ENCODE measurements at regions of chr7 and their contacts with region 1.

Region 1: DNA sequence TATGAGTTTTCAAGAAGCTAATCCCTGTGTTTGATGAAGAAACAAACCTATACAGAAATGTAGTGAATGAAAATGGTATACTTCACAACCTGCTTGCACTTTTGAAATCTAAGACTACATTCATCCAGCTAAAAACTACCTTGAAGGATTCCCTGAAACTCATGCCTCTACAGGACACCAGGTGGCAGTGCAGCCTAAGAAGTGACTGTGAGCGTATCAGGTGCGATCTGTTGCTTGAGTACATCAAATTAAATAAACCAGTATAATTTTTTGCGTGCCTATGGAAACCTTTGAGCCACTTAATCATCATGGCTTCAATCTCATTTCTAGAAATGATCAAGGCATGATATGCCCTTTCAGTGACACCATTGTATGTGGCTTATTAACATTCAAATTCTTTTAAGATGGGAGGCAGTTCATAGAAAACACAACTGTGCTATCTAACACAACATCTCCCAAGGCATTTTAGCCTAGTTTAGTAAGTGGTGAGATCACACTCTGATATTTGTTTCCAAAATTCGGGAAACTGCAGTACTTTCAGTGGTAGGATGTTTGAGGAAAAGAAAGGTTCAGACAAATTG is 57.4 kb downstream of the PPP1R17 start:
- DNase-seq: peak; percentile 73
- ATAC-seq: peak; percentile 91
- H3K4me3 ChIP-seq: no peak overlapping the region
- H3K27ac ChIP-seq: no peak overlapping the region
- H3K4me1 ChIP-seq: peaks cover 3% of the 10 kb centered on the region; the same call in 1 of the 2 replicates
- H3K27me3 ChIP-seq: no peaks in the 10 kb centered on the region
- CTCF ChIP-seq: peak; percentile 91
- POLR2A ChIP-seq: peak; percentile 45; the same call in 1 of the 2 replicates
- RAD21 ChIP-seq: peak; percentile 95

Region 2: GRCh38 chr7:31466036-31466435 is 278.3 kb before region 1 on chr7:
- CTCF ChIA-PET with region 1: no interaction called
- POLR2A ChIA-PET with region 1: no interaction called
- dilution Hi-C with region 1: no loop called
- in situ Hi-C with region 1: no loop called
- intact Hi-C with region 1: no loop called
- DNase-seq: no peak
- ATAC-seq: no peak
- H3K4me3 ChIP-seq: no peak overlapping the region
- H3K27ac ChIP-seq: no peak overlapping the region
- H3K4me1 ChIP-seq: no peaks in the 10 kb centered on the region
- H3K27me3 ChIP-seq: no peaks in the 10 kb centered on the region
- CTCF ChIP-seq: no peak
- POLR2A ChIP-seq: no peak
- RAD21 ChIP-seq: no peak

Region 3: DNA sequence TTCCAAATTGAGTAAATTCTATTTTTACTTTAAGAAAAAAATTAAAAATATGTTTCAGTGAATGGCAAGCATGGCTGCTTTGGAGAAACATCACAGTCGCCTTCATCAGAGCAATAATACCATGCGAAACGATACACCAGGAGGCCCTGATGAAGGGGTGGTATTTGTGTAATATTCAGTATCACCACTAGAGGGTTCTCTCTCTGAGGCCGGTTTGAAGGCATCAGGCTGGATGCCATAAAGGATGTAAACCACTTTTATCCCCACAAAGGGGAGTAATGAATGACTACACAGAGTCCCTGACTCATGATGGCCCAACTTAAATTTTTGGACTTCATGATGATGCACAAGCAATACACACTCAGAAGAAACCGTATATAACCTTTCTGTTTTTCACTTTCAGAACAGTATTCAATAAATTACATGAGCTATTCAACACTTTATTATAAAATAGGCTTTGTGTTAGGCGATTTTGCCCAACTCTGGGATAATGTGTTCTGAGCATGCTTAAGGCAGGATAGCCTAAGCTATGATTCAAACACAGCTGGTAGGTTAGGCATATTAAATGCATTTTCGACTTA is 38.1 kb after region 1 on chr7:
- CTCF ChIA-PET with region 1: no interaction called
- POLR2A ChIA-PET with region 1: no interaction called
- dilution Hi-C with region 1: no loop called
- in situ Hi-C with region 1: no loop called
- intact Hi-C with region 1: no loop called
- DNase-seq: peak; percentile 77
- ATAC-seq: peak; percentile 84
- H3K4me3 ChIP-seq: no peak overlapping the region
- H3K27ac ChIP-seq: no peak overlapping the region
- H3K4me1 ChIP-seq: peaks cover 2% of the 10 kb centered on the region; the same call in 1 of the 2 replicates
- H3K27me3 ChIP-seq: no peaks in the 10 kb centered on the region
- CTCF ChIP-seq: peak; percentile 60
- POLR2A ChIP-seq: no peak
- RAD21 ChIP-seq: peak; percentile 66

Region 4: DNA sequence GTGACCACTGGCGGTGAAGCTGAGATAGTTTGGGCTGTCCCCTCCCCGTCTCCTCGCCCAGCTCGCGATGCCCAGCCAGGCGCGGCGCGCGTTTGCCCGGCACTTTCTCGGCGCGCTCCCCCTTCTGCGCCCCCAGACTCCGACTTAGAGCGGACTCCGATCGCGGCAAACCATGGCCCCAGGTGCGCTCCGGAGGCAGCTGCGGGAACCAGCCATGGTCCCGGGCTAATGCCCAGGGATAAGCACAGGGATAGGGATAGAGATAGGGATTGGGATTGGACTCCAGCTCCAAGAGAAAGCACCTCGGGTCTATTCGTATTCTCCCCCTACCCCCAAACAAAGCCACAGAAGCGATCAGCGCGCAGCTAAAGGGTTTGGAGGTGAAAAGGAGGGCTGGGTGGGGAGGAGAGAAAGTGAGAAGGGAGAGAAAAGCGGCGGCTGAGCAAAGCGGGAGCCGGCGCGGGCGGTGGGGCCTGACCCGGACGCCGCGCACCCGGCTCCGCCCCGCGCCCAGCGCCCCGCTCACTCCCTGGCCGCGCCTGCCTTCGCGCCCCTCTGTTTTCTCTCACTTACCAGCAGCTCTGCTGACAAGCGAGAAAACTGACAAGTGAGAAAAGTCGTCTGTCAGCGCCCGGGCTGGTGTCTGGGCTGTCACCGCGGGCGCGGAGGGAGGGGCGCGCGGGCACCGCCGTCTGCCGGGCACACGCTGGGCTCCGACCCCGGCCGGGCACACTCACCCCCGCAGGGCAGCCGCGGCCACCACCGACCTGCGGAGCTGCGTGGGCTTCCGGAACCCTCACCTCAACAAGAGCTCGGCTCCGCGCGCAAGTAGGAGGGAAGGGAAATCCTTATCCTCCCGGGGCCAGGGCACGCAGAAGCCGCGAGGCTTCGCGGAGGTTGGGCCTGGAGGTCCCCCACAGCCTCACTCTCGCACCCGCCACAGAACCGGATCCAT is 326.3 kb after region 1 on chr7 and contains the start of gene PDE1C:
- CTCF ChIA-PET with region 1: no interaction called
- POLR2A ChIA-PET with region 1: no interaction called
- dilution Hi-C with region 1: no loop called
- in situ Hi-C with region 1: no loop called
- intact Hi-C with region 1: loop called (anchors 2 kb)
- DNase-seq: peak; percentile 19
- ATAC-seq: peak; percentile 76
- H3K4me3 ChIP-seq: peak within 1 kb of the TSS; percentile 91
- H3K27ac ChIP-seq: peak within 1 kb of the TSS; percentile 49
- H3K4me1 ChIP-seq: peaks cover 5% of the 10 kb centered on the region; the same call in 1 of the 2 replicates
- H3K27me3 ChIP-seq: no peaks in the 10 kb centered on the region
- CTCF ChIP-seq: no peak
- POLR2A ChIP-seq: no peak
- RAD21 ChIP-seq: no peak
- total RNA-seq, gene PDE1C: 53.3 and 61.5 TPM in 2 replicates

Region 5: GRCh38 chr7:32347244-32347828 is 603.0 kb after region 1 on chr7:
- CTCF ChIA-PET with region 1: no interaction called
- POLR2A ChIA-PET with region 1: no interaction called
- dilution Hi-C with region 1: no loop called
- in situ Hi-C with region 1: loop called (anchors 10 kb)
- intact Hi-C with region 1: loop called (anchors 5 kb)
- DNase-seq: no peak
- ATAC-seq: peak; percentile 46; the same call in 1 of the 2 replicates
- H3K4me3 ChIP-seq: no peak overlapping the region
- H3K27ac ChIP-seq: no peak overlapping the region
- H3K4me1 ChIP-seq: no peaks in the 10 kb centered on the region
- H3K27me3 ChIP-seq: no peaks in the 10 kb centered on the region
- CTCF ChIP-seq: peak; percentile 56
- POLR2A ChIP-seq: no peak
- RAD21 ChIP-seq: peak; percentile 41

Region 6: DNA sequence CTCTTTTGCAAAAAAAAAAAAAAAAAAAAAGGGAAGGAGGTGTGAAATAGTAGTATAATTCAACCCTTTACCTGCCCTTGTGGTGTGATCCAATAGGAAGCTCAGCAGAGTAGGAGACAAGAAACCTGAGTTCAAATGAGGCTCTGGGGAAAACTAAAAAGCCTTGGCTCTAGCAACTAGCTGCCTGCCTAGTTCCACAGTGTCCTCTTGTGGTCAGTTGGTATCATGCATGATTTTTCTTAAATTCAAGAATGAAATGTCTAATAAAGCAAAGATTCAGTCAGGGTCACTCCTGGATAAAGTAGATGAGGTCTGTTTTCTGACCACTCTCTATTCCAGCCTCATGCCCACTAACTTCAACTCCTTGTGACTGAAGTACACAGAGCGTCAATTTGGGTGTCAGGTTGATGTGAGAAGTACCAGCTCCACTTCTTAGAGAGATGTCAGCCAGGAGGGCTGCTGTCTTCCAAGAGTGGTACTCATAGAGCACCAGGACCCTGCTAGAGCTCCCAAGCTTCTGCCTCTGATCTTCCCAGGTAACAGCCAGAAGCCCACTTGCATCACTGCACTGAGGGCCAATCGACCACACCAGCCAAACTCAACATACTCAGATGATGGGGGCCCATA is 735.3 kb after region 1 on chr7:
- CTCF ChIA-PET with region 1: interaction called, 13 read pairs
- POLR2A ChIA-PET with region 1: no interaction called
- dilution Hi-C with region 1: no loop called
- in situ Hi-C with region 1: loop called (anchors 5 kb)
- intact Hi-C with region 1: loop called (anchors 1 kb)
- DNase-seq: peak; percentile 52
- ATAC-seq: peak; percentile 62; the same call in 1 of the 2 replicates
- H3K4me3 ChIP-seq: no peak overlapping the region
- H3K27ac ChIP-seq: no peak overlapping the region
- H3K4me1 ChIP-seq: peaks cover 3% of the 10 kb centered on the region; the same call in 1 of the 2 replicates
- H3K27me3 ChIP-seq: no peaks in the 10 kb centered on the region
- CTCF ChIP-seq: peak; percentile 93
- POLR2A ChIP-seq: no peak
- RAD21 ChIP-seq: peak; percentile 91